ENCODE measurements at regions of chr7 and their contacts with region 1.

Region 1: GRCh38 chr7:67371429-67372305 is 375.0 kb downstream of the TYW1 start:
- DNase-seq: peak; percentile 70
- ATAC-seq: peak; percentile 100
- H3K4me3 Mint-ChIP-seq: no peak overlapping the region
- H3K27ac Mint-ChIP-seq: no peak overlapping the region
- H3K4me1 Mint-ChIP-seq: no peaks in the 10 kb centered on the region
- H3K27me3 Mint-ChIP-seq: peaks cover 5% of the 10 kb centered on the region; the same call in 1 of the 2 replicates
- CTCF ChIP-seq: peak; percentile 78

Region 2: GRCh38 chr7:66877577-66878300 is 493.9 kb before region 1 on chr7:
- CTCF ChIA-PET with region 1: no interaction called
- POLR2A ChIA-PET with region 1: no interaction called
- DNase-seq: no peak
- ATAC-seq: no peak
- H3K4me3 Mint-ChIP-seq: no peak overlapping the region
- H3K27ac Mint-ChIP-seq: no peak overlapping the region
- H3K4me1 Mint-ChIP-seq: no peaks in the 10 kb centered on the region
- H3K27me3 Mint-ChIP-seq: no peaks in the 10 kb centered on the region
- CTCF ChIP-seq: no peak

Region 3: DNA sequence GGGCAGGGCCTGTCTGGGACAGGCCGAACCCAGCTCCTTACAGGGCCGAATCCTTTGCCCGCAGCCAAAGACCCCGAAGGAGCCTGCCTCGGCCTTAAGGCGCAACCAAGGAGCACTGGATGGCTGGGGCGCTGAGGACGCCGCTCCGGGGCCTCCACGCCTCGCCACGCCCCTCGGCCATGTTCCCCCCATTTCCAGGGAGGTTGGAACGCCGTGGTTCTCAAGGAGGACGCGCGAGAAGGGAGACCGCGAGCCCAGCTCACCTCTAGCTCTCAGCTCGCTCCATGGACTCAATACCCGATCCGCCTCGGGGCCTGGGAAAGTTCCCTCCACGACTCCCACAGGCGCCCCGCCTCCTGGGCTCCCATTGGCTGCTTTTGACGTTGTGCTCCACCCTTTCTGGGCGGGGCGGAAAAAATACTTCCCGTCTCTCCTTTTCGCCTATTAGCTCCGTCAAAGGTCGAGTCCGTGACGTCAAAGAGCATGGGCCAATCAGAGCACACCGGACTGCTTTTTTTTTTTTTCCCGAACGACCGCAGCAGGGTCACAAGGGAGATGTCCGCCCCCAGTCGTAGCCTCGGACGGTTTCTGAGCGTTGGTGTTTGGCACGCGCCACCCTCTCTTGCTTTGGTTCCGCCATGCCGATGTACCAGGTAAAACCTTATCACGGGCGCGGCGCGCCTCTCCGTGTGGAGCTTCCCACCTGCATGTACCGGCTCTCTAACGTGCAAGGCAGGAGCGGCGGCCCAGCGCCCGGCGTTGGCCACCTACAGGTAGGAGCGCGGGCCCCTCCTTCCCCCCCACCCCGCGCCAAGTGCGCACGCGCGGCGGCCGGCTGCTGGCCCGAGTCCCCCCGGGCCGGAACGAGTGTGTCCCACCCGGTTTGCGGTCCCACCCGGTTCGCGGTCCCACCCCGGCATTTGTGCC is 69.3 kb before region 1 on chr7:
- CTCF ChIA-PET with region 1: interaction called, 10 read pairs
- POLR2A ChIA-PET with region 1: no interaction called
- DNase-seq: peak; percentile 99
- ATAC-seq: peak; percentile 85
- H3K4me3 Mint-ChIP-seq: peak overlapping the region; percentile 86
- H3K27ac Mint-ChIP-seq: peak overlapping the region; percentile 96
- H3K4me1 Mint-ChIP-seq: peaks cover 4% of the 10 kb centered on the region
- H3K27me3 Mint-ChIP-seq: peaks cover 3% of the 10 kb centered on the region; the same call in 1 of the 2 replicates
- CTCF ChIP-seq: no peak

Region 4: GRCh38 chr7:67484244-67484751 is 112.6 kb after region 1 on chr7:
- CTCF ChIA-PET with region 1: interaction called, 33 read pairs
- POLR2A ChIA-PET with region 1: no interaction called
- DNase-seq: peak; percentile 80
- ATAC-seq: peak; percentile 86
- H3K4me3 Mint-ChIP-seq: peak overlapping the region; percentile 59
- H3K27ac Mint-ChIP-seq: peak overlapping the region; percentile 43; the same call in 1 of the 2 replicates
- H3K4me1 Mint-ChIP-seq: peaks cover 17% of the 10 kb centered on the region
- H3K27me3 Mint-ChIP-seq: peaks cover 12% of the 10 kb centered on the region
- CTCF ChIP-seq: peak; percentile 49